Transverse colon (tissue), 4 donors: ENCODE measurements at regions of chr2 and their contacts with region 1.

Region 1: DNA sequence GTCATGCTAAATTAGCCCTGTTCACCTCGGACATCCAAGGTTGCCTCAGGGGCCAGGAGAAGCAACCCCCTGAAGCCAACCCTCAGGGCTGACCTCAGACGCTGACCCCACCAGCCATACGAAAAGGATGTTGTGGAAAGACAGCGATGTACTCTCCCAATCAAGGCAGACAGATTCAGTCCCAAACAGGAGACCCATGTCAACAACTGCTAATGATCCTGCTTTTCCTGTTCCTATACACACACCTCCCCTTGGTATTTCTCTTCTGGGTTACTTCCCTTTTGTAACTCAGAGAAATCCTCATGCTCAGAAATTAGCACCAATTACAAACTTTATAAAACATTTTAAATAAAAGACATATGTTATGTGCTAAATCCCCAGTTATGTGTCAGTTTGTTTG is 120.8 kb downstream of the PID1 start:
- DNase-seq: no peak
- H3K4me3 ChIP-seq: no peak overlapping the region
- H3K27ac ChIP-seq: no peak overlapping the region
- H3K4me1 ChIP-seq: peaks cover 0 to 25% (median 8%) of the 10 kb centered on the region in 4 donors
- H3K27me3 ChIP-seq: no peaks in the 10 kb centered on the region
- CTCF ChIP-seq: no peak
- EP300 ChIP-seq: no peak
- POLR2A ChIP-seq: no peak

Region 2: DNA sequence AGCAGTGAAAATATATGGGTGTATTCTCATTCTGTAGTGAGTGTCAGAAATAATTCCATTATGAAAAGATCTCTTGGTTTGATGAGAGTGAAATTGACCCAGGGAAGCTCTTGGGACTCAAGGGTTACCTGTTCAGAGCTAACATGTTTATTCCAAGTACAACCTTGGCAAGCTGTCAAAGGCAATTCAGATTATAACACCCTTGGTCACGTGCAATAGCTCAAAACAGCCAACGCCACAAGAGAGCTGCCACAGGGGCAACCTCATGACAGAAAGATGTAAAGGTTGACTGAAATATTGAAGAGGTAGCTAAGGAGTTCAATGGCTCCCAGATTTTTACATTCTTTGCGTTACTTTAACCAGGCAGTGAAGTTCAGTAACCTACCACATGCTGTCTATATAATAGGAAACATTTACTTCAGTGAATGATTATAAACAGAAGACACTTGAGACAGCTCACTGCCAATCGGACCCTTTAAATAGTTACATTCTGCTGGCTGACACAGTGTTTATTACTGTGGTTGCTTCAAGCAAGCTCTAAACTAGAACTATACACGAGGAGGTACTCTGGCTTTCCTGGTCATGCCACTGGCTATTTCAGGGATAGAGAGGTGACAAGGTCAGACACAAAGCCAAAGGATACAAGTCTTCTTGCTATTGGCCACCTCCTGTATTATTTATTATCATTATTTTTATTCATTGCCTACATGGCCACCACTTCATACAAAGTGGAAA is 66.5 kb before region 1 on chr2:
- in situ Hi-C with region 1: no loop called
- intact Hi-C with region 1: loop called (anchors 2 kb)
- DNase-seq: peak; percentile 60
- H3K4me3 ChIP-seq: no peak overlapping the region
- H3K27ac ChIP-seq: peak overlapping the region; percentile 45 to 72 (median 53)
- H3K4me1 ChIP-seq: peaks cover 7 to 42% (median 24%) of the 10 kb centered on the region in 4 donors
- H3K27me3 ChIP-seq: no peaks in the 10 kb centered on the region
- CTCF ChIP-seq: no peak
- EP300 ChIP-seq: no peak
- POLR2A ChIP-seq: no peak

Region 3: GRCh38 chr2:229118927-229119326 is 31.4 kb before region 1 on chr2:
- in situ Hi-C with region 1: no loop called
- intact Hi-C with region 1: no loop called
- DNase-seq: no peak
- H3K4me3 ChIP-seq: no peak overlapping the region
- H3K27ac ChIP-seq: no peak overlapping the region
- H3K4me1 ChIP-seq: no peaks in the 10 kb centered on the region
- H3K27me3 ChIP-seq: no peaks in the 10 kb centered on the region
- CTCF ChIP-seq: no peak
- EP300 ChIP-seq: no peak
- POLR2A ChIP-seq: no peak